ENCODE measurements at regions of chr5 and their contacts with region 1.

Region 1: GRCh38 chr5:159178978-159179377 is 30.4 kb downstream of the RNF145 start:
- DNase-seq: peak; percentile 57
- ATAC-seq: peak; percentile 60
- H3K4me3 ChIP-seq: no peak overlapping the region
- H3K4me3 Mint-ChIP-seq: peak overlapping the region; percentile 45
- H3K27ac ChIP-seq: peak overlapping the region in 1 of 2 donors; percentile 69
- H3K27ac Mint-ChIP-seq: peak overlapping the region; percentile 64
- H3K4me1 ChIP-seq: peaks cover 15 to 34% of the 10 kb centered on the region in 2 donors
- H3K4me1 Mint-ChIP-seq: peaks cover 41% of the 10 kb centered on the region
- H3K27me3 ChIP-seq: no peaks in the 10 kb centered on the region
- H3K27me3 Mint-ChIP-seq: no peaks in the 10 kb centered on the region
- CTCF ChIP-seq: no peak

Region 2: GRCh38 chr5:159198063-159199036 is 19.4 kb after region 1 on chr5:
- CTCF ChIA-PET with region 1: interaction called, 3 read pairs
- POLR2A ChIA-PET with region 1: no interaction called
- intact Hi-C with region 1: loop called (anchors 2 kb)
- DNase-seq: peak; percentile 80
- ATAC-seq: peak; percentile 97
- H3K4me3 ChIP-seq: no peak overlapping the region
- H3K4me3 Mint-ChIP-seq: peak overlapping the region; percentile 30
- H3K27ac ChIP-seq: peak overlapping the region; percentile 64 to 67
- H3K27ac Mint-ChIP-seq: peak overlapping the region; percentile 76
- H3K4me1 ChIP-seq: peaks cover 26 to 42% of the 10 kb centered on the region in 2 donors
- H3K4me1 Mint-ChIP-seq: peaks cover 49% of the 10 kb centered on the region
- H3K27me3 ChIP-seq: no peaks in the 10 kb centered on the region
- H3K27me3 Mint-ChIP-seq: no peaks in the 10 kb centered on the region
- CTCF ChIP-seq: no peak

Measured in B cell (primary cell).